Right ventricle myocardium superior (tissue), 1 donor: ENCODE measurements at regions of chr1 and their contacts with region 1.

Region 1: DNA sequence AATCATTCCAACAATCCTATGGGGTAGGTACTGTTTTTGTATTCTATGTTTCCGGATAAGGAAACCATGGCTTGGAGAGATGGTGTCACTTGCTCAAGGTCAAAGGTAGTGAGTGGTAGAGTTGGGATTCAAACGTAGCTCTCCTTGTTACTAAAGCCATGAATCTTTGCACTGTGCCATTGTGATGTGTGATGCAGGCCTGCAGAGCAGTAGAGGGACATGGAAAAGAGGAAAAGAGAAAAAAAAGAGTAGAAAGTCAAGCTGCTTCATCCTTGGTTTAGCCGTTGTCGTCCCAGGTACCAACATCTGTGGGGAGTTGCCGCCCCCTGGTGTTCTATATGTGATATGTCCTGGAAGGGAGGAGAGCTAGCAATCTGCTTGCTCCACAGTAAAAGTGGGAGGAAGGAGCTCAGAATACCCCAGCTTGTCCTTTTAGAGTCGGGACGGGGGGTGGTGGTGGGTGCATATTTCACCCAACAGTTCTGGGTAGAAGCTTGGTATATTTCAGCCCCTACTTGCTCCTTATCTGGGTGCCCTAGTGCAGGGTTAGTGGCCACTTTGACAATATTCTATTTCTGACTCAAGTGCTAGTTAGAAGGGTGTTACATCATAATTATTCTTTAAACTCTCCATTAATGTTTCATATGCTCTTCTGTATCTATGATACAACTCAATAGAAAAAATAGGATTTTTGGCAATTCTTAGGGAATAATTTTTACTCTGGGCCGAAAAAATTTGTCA is 98.4 kb downstream of the EBNA1BP2 start:
- DNase-seq: peak; percentile 76
- ATAC-seq: peak; percentile 95

Region 2: DNA sequence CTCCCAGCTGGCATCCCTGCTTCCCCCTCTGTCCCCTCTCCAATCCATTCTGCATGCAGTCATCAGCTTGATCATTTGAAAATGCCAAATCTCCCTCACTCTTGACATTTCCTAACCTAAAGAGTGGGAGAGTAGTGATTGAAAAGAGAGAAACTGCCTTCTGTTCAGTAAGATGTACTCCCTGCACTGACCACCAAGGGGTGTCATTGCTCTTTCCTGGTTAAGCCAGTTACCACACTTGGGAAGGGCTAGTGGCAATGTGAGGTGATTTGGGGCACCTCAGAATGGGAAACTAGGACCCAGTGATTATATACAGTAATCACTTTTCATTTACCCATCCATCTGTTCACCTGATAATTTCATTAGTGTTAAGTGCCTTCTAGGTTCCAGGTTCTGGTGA is 295.8 kb before region 1 on chr1:
- intact Hi-C with region 1: loop called (anchors 5 kb)
- DNase-seq: no peak
- ATAC-seq: peak; percentile 73

Region 3: GRCh38 chr1:42913426-42914091 is 160.1 kb before region 1 on chr1:
- intact Hi-C with region 1: loop called (anchors 2 kb)
- DNase-seq: no peak
- ATAC-seq: peak; percentile 78

Region 4: GRCh38 chr1:43383449-43383848 is 309.8 kb after region 1 on chr1:
- intact Hi-C with region 1: no loop called
- DNase-seq: no peak
- ATAC-seq: peak; percentile 70